Endothelial cell of umbilical vein (primary cell): ENCODE measurements at regions of chr19 and their contacts with region 1.

Region 1: DNA sequence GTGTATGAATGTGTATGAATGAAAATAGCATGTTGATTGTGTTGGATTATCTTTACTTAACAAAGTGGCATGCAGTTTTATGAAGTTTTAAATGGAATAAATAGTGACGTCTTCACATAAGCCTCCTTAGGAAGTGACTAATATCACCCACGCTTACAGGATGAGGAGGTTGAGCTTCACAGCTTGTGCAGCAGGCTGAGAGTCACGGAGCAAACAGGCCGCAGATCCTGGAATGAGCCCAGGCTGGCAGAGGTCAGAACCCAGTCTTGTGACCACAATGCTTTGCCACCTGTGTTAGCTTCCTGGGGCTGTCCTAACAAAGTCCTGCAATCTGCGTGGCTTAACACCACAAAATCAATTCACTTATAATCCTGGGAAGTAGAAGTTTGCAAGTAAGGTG is 20.8 kb downstream of the LAIR2 start:
- DNase-seq: peak; percentile 79
- H3K4me3 ChIP-seq: no peak overlapping the region
- H3K27ac ChIP-seq: peak overlapping the region; percentile 58
- H3K4me1 ChIP-seq: peaks cover 39% of the 10 kb centered on the region
- H3K27me3 ChIP-seq: no peaks in the 10 kb centered on the region
- CTCF ChIP-seq: no peak
- POLR2A ChIP-seq: no peak

Region 2: GRCh38 chr19:54407780-54408179 is 115.6 kb before region 1 on chr19:
- CTCF ChIA-PET with region 1: no interaction called
- POLR2A ChIA-PET with region 1: no interaction called
- dilution Hi-C with region 1: no loop called
- intact Hi-C with region 1: no loop called
- DNase-seq: no peak
- H3K4me3 ChIP-seq: no peak overlapping the region
- H3K27ac ChIP-seq: no peak overlapping the region
- H3K4me1 ChIP-seq: no peaks in the 10 kb centered on the region
- H3K27me3 ChIP-seq: no peaks in the 10 kb centered on the region
- CTCF ChIP-seq: no peak
- POLR2A ChIP-seq: no peak

Region 3: GRCh38 chr19:54473021-54473891 is 50.1 kb before region 1 on chr19 and contains the start of gene CDC42EP5:
- CTCF ChIA-PET with region 1: no interaction called
- POLR2A ChIA-PET with region 1: no interaction called
- dilution Hi-C with region 1: no loop called
- intact Hi-C with region 1: loop called (anchors 1 kb)
- DNase-seq: peak; percentile 90
- H3K4me3 ChIP-seq: peak within 1 kb of the TSS; percentile 60 to 70 (median 65)
- H3K27ac ChIP-seq: peak within 1 kb of the TSS; percentile 68
- H3K4me1 ChIP-seq: peaks cover 35% of the 10 kb centered on the region
- H3K27me3 ChIP-seq: no peaks in the 10 kb centered on the region
- CTCF ChIP-seq: no peak
- POLR2A ChIP-seq: no peak
- total RNA-seq, gene CDC42EP5: 73.8 and 85.5 TPM in 2 replicates

Region 4: GRCh38 chr19:54485851-54486250 is 37.6 kb before region 1 on chr19:
- CTCF ChIA-PET with region 1: no interaction called
- POLR2A ChIA-PET with region 1: no interaction called
- dilution Hi-C with region 1: no loop called
- intact Hi-C with region 1: no loop called
- DNase-seq: no peak
- H3K4me3 ChIP-seq: no peak overlapping the region
- H3K27ac ChIP-seq: no peak overlapping the region
- H3K4me1 ChIP-seq: no peaks in the 10 kb centered on the region
- H3K27me3 ChIP-seq: no peaks in the 10 kb centered on the region
- CTCF ChIP-seq: no peak
- POLR2A ChIP-seq: no peak

Region 5: DNA sequence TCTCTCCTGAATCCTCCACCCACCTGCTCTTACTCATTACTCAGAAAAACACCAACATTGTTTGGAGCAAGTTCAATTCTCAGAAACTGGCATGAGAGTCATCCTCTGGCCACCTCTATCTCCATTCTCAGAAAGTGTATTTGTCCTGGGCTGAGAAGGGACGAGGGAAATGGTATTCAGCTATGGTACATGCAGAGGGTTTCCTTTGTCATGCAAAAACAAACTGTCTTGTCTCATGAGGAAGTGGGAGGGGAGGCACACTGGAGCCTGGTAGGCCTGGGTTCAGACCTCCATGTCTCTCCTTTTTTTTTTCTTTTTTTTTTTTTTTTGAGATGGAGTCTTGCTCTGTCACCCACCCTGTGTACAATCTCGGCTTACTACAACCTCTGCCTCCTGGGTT is 18.3 kb after region 1 on chr19:
- CTCF ChIA-PET with region 1: no interaction called
- POLR2A ChIA-PET with region 1: no interaction called
- dilution Hi-C with region 1: no loop called
- intact Hi-C with region 1: no loop called
- DNase-seq: no peak
- H3K4me3 ChIP-seq: no peak overlapping the region
- H3K27ac ChIP-seq: no peak overlapping the region
- H3K4me1 ChIP-seq: no peaks in the 10 kb centered on the region
- H3K27me3 ChIP-seq: no peaks in the 10 kb centered on the region
- CTCF ChIP-seq: no peak
- POLR2A ChIP-seq: no peak